ENCODE measurements at regions of chr10 and their contacts with region 1.

Region 1: GRCh38 chr10:78972947-78973900 is 95.5 kb upstream of the ZMIZ1 start:
- DNase-seq: peak; percentile 97
- ATAC-seq: peak; percentile 72
- H3K4me3 ChIP-seq: peak overlapping the region; percentile 40 to 76 (median 59)
- H3K27ac ChIP-seq: peak overlapping the region; percentile 98
- H3K4me1 ChIP-seq: peaks cover 92% of the 10 kb centered on the region
- H3K27me3 ChIP-seq: no peaks in the 10 kb centered on the region
- CTCF ChIP-seq: peak; percentile 18; the same call in 1 of the 2 replicates
- EP300 ChIP-seq: peak; percentile 21 to 74; a peak in 2 of 4 replicates
- POLR2A ChIP-seq: peak in 1 of 2 experiments; percentile 80; a peak in 2 of 4 replicates
- RAD21 ChIP-seq: peak; percentile 65; the same call in 1 of the 2 replicates

Region 2: DNA sequence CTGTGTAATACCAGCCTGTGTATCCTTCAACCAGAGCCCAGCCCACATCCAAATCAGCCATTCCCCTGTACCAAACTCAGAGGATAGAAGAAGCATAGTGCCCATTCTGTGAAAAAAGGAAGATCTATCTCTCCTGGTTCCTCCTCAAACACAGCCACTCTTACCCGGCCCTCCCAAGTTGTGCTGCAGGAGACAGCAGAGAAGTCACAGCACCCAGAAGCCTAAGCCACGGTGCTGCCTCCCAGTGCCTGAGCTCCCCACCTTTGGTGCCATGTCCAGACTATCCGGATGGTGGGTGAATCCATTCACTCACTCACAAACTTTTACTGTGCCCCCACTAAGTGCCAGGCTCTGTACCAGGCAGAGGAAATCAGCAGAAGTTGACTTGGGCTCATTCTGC is 70.4 kb before region 1 on chr10:
- CTCF ChIA-PET with region 1: no interaction called
- POLR2A ChIA-PET with region 1: no interaction called
- in situ Hi-C with region 1: no loop called
- intact Hi-C with region 1: no loop called
- DNase-seq: no peak
- ATAC-seq: no peak
- H3K4me3 ChIP-seq: no peak overlapping the region
- H3K27ac ChIP-seq: no peak overlapping the region
- H3K4me1 ChIP-seq: peaks cover 38% of the 10 kb centered on the region
- H3K27me3 ChIP-seq: peaks cover 6 to 29% of the 10 kb centered on the region in 2 experiments
- CTCF ChIP-seq: no peak
- EP300 ChIP-seq: no peak
- POLR2A ChIP-seq: no peak
- RAD21 ChIP-seq: no peak

Region 3: GRCh38 chr10:78913219-78914059 is 59.8 kb before region 1 on chr10:
- CTCF ChIA-PET with region 1: no interaction called
- POLR2A ChIA-PET with region 1: no interaction called
- in situ Hi-C with region 1: no loop called
- intact Hi-C with region 1: loop called (anchors 10 kb)
- DNase-seq: peak; percentile 86
- ATAC-seq: peak; percentile 94
- H3K4me3 ChIP-seq: peak overlapping the region in 1 of 3 experiments; percentile 27; a peak in 1 of 6 replicates
- H3K27ac ChIP-seq: no peak overlapping the region
- H3K4me1 ChIP-seq: peaks cover 47% of the 10 kb centered on the region
- H3K27me3 ChIP-seq: peaks cover 2 to 43% of the 10 kb centered on the region in 2 experiments; a peak in 4 of 5 replicates
- CTCF ChIP-seq: no peak; the same call in 1 of the 2 replicates
- EP300 ChIP-seq: 0 out of 4 replicates have a peak, but pooled peaks of 1 of the 2 experiments have one; percentile 40
- POLR2A ChIP-seq: no peak
- RAD21 ChIP-seq: no peak

Region 4: DNA sequence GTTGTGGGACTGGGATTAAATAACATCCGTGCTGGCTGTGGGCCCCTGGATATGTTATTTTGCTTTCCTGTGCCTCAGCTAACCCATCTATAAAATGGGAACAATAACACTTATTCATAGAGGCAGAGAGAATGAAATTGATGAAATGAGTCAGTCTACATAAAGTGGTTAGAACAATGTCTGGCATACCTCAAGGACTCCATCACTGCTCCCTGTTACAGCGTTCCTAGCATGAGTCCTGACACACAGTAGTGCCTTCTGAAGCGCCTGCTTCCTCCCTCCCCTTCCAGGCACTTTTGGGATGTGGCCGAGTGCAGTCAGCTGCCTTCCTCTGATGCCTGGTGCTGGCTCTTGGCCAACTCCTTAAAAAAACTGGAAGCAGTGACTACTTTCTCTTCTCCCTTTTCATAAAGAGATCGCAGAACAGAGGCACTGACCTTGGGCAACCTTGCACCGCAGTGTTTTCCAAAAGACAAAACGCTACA is 12.9 kb before region 1 on chr10:
- CTCF ChIA-PET with region 1: no interaction called
- POLR2A ChIA-PET with region 1: interaction called, 122 read pairs
- in situ Hi-C with region 1: no loop called
- intact Hi-C with region 1: loop called (anchors 1 kb)
- DNase-seq: no peak
- ATAC-seq: no peak
- H3K4me3 ChIP-seq: no peak overlapping the region
- H3K27ac ChIP-seq: no peak overlapping the region
- H3K4me1 ChIP-seq: peaks cover 44% of the 10 kb centered on the region
- H3K27me3 ChIP-seq: no peaks in the 10 kb centered on the region
- CTCF ChIP-seq: no peak
- EP300 ChIP-seq: no peak
- POLR2A ChIP-seq: no peak
- RAD21 ChIP-seq: no peak

Region 5: DNA sequence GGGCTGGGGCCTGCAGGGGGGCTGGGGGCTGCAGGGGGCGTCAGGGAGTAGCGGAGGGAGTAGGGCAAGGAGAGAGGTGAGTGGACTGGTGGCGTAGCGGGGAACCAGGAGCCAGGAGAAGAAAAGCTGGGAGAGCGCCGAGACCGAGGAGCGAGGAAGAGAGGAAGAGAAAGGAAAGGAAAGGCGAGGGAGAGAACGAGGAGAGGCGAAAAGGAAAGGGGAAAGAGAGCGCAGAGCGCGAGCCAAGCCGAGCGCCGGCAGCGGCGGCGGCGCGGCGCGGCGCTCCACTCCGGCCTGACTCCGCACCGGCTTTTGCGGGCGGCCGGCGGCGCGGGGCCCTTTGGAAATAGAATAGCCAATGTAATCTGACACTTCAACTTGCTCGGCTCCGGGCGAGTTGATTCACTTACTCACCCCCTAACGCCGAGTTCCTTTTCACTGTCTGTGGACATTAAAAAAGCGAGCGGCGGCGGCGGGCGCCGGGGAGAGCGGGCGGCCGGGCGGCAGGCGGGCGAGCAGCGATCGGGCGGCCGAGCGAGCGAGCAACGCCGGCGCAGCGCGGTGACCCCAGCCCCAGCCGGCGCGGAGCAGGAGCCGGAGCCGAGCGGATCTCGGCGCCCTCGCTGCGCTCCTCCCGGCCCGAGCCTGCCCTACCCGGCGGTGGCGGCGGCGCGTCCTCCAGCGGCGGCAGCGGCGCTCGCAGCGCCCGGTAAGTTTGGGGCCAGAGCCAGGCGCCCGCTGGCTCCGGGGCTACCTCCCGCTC is 95.5 kb after region 1 on chr10 and contains the start of gene ZMIZ1:
- CTCF ChIA-PET with region 1: no interaction called
- POLR2A ChIA-PET with region 1: interaction called, 54 read pairs
- in situ Hi-C with region 1: no loop called
- intact Hi-C with region 1: loop called (anchors 1 kb)
- DNase-seq: peak; percentile 88
- ATAC-seq: peak; percentile 7
- H3K4me3 ChIP-seq: peak within 1 kb of the TSS; percentile 93 to 98 (median 93)
- H3K27ac ChIP-seq: peak within 1 kb of the TSS; percentile 91
- H3K4me1 ChIP-seq: peaks cover 56% of the 10 kb centered on the region
- H3K27me3 ChIP-seq: no peaks in the 10 kb centered on the region; a peak in 1 of 5 replicates
- CTCF ChIP-seq: no peak
- EP300 ChIP-seq: peak in 1 of 2 experiments; percentile 63; a peak in 2 of 4 replicates
- POLR2A ChIP-seq: peak in 1 of 2 experiments; percentile 71; a peak in 2 of 4 replicates
- RAD21 ChIP-seq: peak; percentile 67
- total RNA-seq, gene ZMIZ1: 5.3 and 11.0 TPM in 2 replicates

Region 6: DNA sequence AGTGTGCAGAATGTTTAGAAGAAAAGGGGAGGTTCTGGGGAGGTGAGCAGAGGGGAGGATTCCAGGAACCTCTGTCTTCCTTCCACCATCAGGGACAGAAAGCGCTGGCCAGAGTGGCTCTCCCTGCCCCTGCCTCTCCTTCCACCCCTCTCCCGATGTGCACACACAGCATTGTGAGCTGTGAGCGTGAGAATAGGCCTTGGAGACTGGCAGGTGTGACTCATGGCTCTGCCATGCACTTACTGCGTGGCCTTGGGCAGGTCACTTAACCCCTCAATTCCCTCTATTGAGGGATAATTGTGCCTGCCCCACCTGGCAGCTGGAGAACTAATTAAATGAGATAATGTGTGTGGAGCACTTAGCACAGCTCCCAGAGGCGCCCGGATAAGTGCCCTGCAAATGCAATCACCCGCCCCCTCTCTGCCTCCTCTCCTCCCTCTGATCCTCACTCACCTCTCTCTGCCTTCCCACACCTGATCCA is 211.0 kb after region 1 on chr10:
- CTCF ChIA-PET with region 1: no interaction called
- POLR2A ChIA-PET with region 1: interaction called, 10 read pairs
- in situ Hi-C with region 1: loop called (anchors 5 kb)
- intact Hi-C with region 1: loop called (anchors 5 kb)
- DNase-seq: peak; percentile 77
- ATAC-seq: peak; percentile 44
- H3K4me3 ChIP-seq: peak overlapping the region in 1 of 3 experiments; percentile 50; a peak in 2 of 6 replicates
- H3K27ac ChIP-seq: peak overlapping the region; percentile 93
- H3K4me1 ChIP-seq: peaks cover 100% of the 10 kb centered on the region
- H3K27me3 ChIP-seq: no peaks in the 10 kb centered on the region
- CTCF ChIP-seq: no peak
- EP300 ChIP-seq: peak; percentile 28 to 78; a peak in 2 of 4 replicates
- POLR2A ChIP-seq: peak; percentile 34 to 52; a peak in 2 of 4 replicates
- RAD21 ChIP-seq: 0 out of 2 replicates have a peak, but pooled peaks have one; percentile 10

Region 7: GRCh38 chr10:79345241-79346019 is 372.2 kb after region 1 on chr10:
- CTCF ChIA-PET with region 1: no interaction called
- POLR2A ChIA-PET with region 1: no interaction called
- in situ Hi-C with region 1: no loop called
- intact Hi-C with region 1: no loop called
- DNase-seq: no peak
- ATAC-seq: no peak
- H3K4me3 ChIP-seq: no peak overlapping the region
- H3K27ac ChIP-seq: no peak overlapping the region
- H3K4me1 ChIP-seq: peaks cover 75% of the 10 kb centered on the region
- H3K27me3 ChIP-seq: no peaks in the 10 kb centered on the region
- CTCF ChIP-seq: no peak
- EP300 ChIP-seq: no peak
- POLR2A ChIP-seq: no peak
- RAD21 ChIP-seq: no peak